ENCODE measurements at regions of chr3 and their contacts with region 1.

Region 1: GRCh38 chr3:184241447-184242296 is 7.1 kb downstream of the ALG3 start:
- DNase-seq: no peak
- H3K4me3 ChIP-seq: no peak overlapping the region
- CTCF ChIP-seq: peak in 1 of 3 donors; percentile 40
- POLR2A ChIP-seq: no peak

Region 2: GRCh38 chr3:184143327-184143726 is 98.3 kb before region 1 on chr3:
- intact Hi-C with region 1: loop called (anchors 5 kb)
- DNase-seq: no peak
- H3K4me3 ChIP-seq: no peak overlapping the region
- CTCF ChIP-seq: no peak
- POLR2A ChIP-seq: no peak

Measured in lower leg skin (tissue), 4 donors.